A549 (cell line): ENCODE measurements at regions of chr18 and their contacts with region 1.

Region 1: GRCh38 chr18:79528846-79529245 is 133.1 kb downstream of the NFATC1 start:
- DNase-seq: peak; percentile 62 to 73
- ATAC-seq: peak; percentile 75 to 91; a peak in 5 of 6 replicates
- H3K4me3 ChIP-seq: no peak overlapping the region
- H3K27ac ChIP-seq: no peak overlapping the region
- H3K4me1 ChIP-seq: no peaks in the 10 kb centered on the region
- CTCF ChIP-seq: peak; percentile 64
- EP300 ChIP-seq: no peak
- POLR2A ChIP-seq: no peak
- RAD21 ChIP-seq: peak; percentile 78 to 83

Region 2: DNA sequence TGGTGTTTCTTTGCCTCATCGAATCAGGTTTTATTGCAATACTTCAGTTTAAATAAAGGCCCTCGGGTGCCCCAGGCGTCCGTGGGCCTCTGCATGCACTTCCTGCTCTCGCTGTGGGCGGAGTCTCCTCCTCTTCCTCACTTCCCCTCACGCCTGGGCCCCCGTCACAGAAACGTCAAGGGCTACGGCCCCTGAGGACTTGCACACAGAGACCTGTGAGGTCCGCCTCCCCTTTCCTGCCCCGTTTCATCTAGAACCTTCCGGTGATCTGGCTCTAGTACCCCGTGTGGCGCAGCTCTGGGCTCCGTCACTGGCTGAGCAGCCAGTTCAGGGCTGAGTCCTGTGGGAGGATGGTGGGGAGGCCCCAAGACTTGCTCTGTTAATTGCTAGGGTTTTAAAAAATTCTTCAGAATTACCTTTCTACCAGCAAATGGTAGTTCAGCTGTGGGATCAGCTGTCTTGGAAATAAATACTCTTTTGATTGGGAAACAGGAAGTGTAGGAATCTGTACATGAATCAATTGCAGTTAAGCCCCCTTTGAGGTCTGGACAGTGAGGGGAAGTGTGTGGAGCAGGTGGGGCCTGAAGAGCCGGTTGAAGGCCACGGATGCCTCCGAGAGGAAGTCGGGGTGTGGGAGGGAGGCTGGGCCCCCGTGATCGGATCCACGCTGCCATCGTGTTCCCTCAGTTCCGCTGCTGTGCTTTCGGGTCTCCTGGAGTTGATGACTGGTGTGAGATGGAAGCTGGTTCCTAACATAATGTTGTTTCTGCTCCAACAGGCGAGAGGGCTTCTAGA is 122.9 kb before region 1 on chr18:
- CTCF ChIA-PET with region 1: no interaction called
- POLR2A ChIA-PET with region 1: no interaction called
- DNase-seq: no peak
- ATAC-seq: no peak
- H3K4me3 ChIP-seq: no peak overlapping the region
- H3K27ac ChIP-seq: no peak overlapping the region
- H3K4me1 ChIP-seq: no peaks in the 10 kb centered on the region
- CTCF ChIP-seq: no peak
- EP300 ChIP-seq: no peak
- POLR2A ChIP-seq: no peak
- RAD21 ChIP-seq: no peak

Region 3: DNA sequence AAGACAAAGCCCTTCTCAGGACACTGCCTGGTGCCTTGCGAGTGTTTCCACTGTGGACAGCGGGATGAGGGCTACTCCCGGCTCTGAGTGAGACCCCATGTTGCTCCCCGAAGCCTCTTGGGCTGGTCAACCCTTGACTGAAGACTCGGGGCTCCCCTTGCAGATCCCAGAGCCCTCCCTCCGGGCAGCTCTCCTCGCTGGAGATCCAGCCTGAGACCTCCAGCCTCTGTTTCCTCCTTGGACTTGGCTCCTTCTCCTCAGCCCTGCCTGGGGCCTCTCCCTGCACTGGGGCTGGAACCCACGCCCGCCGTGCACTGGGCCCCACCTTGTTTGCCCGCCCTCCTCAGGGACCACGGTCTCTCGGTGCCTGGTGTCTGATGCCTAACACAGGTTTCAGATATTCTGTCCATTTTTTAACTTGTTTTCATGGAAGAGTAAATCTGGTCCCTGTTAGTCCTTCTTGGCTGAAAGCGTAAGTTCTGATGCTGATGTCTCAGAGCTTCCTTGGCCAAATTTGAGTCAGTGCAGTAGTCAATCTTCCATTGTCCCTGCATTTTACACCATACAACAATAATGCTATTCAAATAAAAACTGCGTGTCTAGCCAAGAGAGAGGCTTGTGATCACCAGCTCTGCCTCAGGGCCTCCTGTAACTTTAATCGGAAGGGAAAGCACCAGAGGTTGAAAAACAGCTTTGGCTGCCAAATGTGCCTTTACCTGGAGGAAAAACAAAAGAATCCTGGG is 11.5 kb after region 1 on chr18:
- CTCF ChIA-PET with region 1: interaction called, 12 read pairs
- POLR2A ChIA-PET with region 1: no interaction called
- DNase-seq: no peak
- ATAC-seq: no peak
- H3K4me3 ChIP-seq: no peak overlapping the region
- H3K27ac ChIP-seq: no peak overlapping the region
- H3K4me1 ChIP-seq: no peaks in the 10 kb centered on the region
- CTCF ChIP-seq: no peak
- EP300 ChIP-seq: no peak
- POLR2A ChIP-seq: no peak
- RAD21 ChIP-seq: no peak